ENCODE measurements at regions of chr12 and their contacts with region 1.

Region 1: GRCh38 chr12:29463198-29463597 is 34.3 kb downstream of the OVCH1 start:
- DNase-seq: no peak
- H3K4me3 ChIP-seq: no peak overlapping the region
- H3K27ac ChIP-seq: no peak overlapping the region
- H3K4me1 ChIP-seq: no peaks in the 10 kb centered on the region
- H3K27me3 ChIP-seq: no peaks in the 10 kb centered on the region
- CTCF ChIP-seq: no peak

Region 2: GRCh38 chr12:29234965-29235626 is 228.1 kb before region 1 on chr12:
- CTCF ChIA-PET with region 1: no interaction called
- dilution Hi-C with region 1: no loop called
- in situ Hi-C with region 1: no loop called
- intact Hi-C with region 1: no loop called
- DNase-seq: peak; percentile 39
- H3K4me3 ChIP-seq: no peak overlapping the region
- H3K27ac ChIP-seq: no peak overlapping the region
- H3K4me1 ChIP-seq: no peaks in the 10 kb centered on the region
- H3K27me3 ChIP-seq: no peaks in the 10 kb centered on the region
- CTCF ChIP-seq: no peak

Region 3: GRCh38 chr12:29365091-29365490 is 98.1 kb before region 1 on chr12:
- CTCF ChIA-PET with region 1: no interaction called
- dilution Hi-C with region 1: no loop called
- in situ Hi-C with region 1: no loop called
- intact Hi-C with region 1: no loop called
- DNase-seq: no peak
- H3K4me3 ChIP-seq: no peak overlapping the region
- H3K27ac ChIP-seq: no peak overlapping the region
- H3K4me1 ChIP-seq: no peaks in the 10 kb centered on the region
- H3K27me3 ChIP-seq: no peaks in the 10 kb centered on the region
- CTCF ChIP-seq: no peak

Region 4: DNA sequence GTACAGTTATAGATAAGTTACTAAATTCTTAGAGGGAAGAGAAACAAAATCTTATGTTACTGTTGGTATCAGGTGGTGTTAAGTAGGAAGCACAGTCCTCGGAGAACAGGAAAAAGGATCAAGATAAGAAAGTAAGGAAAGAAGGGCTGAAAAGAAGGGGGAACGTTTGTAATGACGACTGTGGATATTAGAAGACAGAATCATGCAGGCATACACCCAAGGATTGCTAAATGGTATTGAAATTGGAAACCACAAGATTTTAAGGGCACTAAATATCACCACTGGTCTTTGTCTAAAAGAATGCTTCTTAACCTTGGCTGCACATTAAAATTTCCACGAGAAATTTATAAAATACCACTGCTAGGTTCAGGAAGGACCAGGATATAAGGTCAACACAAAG is 48.1 kb before region 1 on chr12:
- CTCF ChIA-PET with region 1: no interaction called
- dilution Hi-C with region 1: no loop called
- in situ Hi-C with region 1: no loop called
- intact Hi-C with region 1: no loop called
- DNase-seq: no peak
- H3K4me3 ChIP-seq: no peak overlapping the region
- H3K27ac ChIP-seq: no peak overlapping the region
- H3K4me1 ChIP-seq: no peaks in the 10 kb centered on the region
- H3K27me3 ChIP-seq: no peaks in the 10 kb centered on the region
- CTCF ChIP-seq: no peak

Region 5: GRCh38 chr12:29447285-29447975 is 15.8 kb before region 1 on chr12:
- CTCF ChIA-PET with region 1: no interaction called
- dilution Hi-C with region 1: no loop called
- in situ Hi-C with region 1: no loop called
- intact Hi-C with region 1: loop called (anchors 2 kb)
- DNase-seq: no peak
- H3K4me3 ChIP-seq: no peak overlapping the region
- H3K27ac ChIP-seq: no peak overlapping the region
- H3K4me1 ChIP-seq: no peaks in the 10 kb centered on the region
- H3K27me3 ChIP-seq: no peaks in the 10 kb centered on the region
- CTCF ChIP-seq: no peak

Measured in mammary epithelial cell (primary cell).